ENCODE measurements at regions of chr6 and their contacts with region 1.

Region 1: DNA sequence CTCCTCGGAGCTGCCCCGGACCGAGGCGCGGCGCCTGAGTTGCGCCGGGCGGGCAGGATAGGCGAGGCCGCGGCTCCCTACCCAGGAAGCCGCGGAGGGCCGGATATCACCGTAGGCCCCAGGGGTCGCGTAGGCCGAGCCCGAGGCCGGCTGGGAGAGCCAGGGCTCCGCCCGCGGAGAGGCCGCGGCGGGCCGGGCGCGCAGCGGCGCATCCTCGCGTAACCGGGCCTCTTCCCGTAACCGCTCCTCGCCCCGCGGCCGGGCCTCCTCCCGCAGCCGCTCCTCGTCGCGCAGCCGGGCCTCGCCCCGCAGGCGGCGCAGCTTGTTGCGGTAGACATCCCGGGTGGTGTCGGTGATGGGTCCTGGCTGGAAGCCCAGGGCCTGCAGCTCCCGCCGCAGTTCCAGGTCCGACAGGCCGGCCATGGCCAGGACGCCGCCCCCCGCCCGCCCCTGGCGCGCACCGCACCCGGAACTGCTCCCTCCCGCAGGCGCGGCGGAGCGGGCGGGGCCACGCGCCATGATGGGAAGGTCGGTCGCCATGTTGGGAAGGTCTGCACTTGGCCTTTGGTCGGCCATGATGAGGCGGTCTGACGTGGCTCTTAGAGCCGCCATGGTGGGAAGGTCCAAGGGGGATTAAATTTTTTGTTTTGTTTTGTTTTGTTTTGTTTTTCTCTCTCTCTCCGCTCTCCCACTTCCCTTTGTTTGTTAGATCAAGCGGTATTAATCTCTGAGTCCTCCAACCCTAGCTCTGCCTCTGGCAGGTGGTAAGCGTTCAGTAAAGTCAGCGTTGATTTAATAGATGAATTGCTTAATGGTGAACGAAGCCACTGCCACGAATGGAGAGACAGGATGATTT is at the start of gene LEMD2:
- DNase-seq: peak; percentile 94
- ATAC-seq: peak; percentile 93
- H3K4me3 ChIP-seq: peak within 1 kb of the TSS; percentile 77
- H3K27ac ChIP-seq: peak within 1 kb of the TSS; percentile 88
- H3K4me1 ChIP-seq: peaks cover 13% of the 10 kb centered on the region
- H3K27me3 ChIP-seq: peaks cover 6% of the 10 kb centered on the region
- CTCF ChIP-seq: no peak
- POLR2A ChIP-seq: peak; percentile 71
- RAD21 ChIP-seq: no peak
- total RNA-seq, gene LEMD2: 24.4 and 26.5 TPM in 2 replicates

Region 2: DNA sequence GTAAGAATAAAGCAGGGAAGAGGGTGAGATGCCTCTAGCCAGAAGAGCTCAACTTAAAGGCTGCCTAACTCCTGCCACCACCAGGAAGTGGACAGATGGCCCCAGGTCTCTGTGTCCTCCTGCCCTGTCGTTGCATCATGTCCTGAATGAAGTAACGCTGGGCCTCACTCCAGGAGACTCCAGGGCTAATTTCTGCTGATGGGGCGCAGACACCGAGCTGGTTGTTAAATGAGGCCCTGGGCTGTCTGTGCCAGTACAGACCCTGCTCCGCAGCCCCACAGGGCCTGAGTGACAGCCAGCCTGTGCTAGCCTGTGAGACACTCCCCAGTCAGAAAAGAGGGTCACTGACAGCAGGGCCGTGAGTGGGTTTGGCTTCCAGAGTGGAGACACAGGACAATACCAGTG is 48.7 kb before region 1 on chr6:
- CTCF ChIA-PET with region 1: no interaction called
- POLR2A ChIA-PET with region 1: no interaction called
- dilution Hi-C with region 1: no loop called
- in situ Hi-C with region 1: no loop called
- intact Hi-C with region 1: no loop called
- DNase-seq: no peak
- ATAC-seq: no peak
- H3K4me3 ChIP-seq: no peak overlapping the region
- H3K27ac ChIP-seq: no peak overlapping the region
- H3K4me1 ChIP-seq: peaks cover 4% of the 10 kb centered on the region; the same call in 1 of the 2 replicates
- H3K27me3 ChIP-seq: peaks cover 8% of the 10 kb centered on the region; the same call in 1 of the 2 replicates
- CTCF ChIP-seq: no peak
- POLR2A ChIP-seq: no peak
- RAD21 ChIP-seq: no peak

Region 3: GRCh38 chr6:33840048-33840926 is 51.4 kb after region 1 on chr6:
- CTCF ChIA-PET with region 1: no interaction called
- POLR2A ChIA-PET with region 1: no interaction called
- dilution Hi-C with region 1: no loop called
- in situ Hi-C with region 1: no loop called
- intact Hi-C with region 1: loop called (anchors 2 kb)
- DNase-seq: peak; percentile 98
- ATAC-seq: peak; percentile 85
- H3K4me3 ChIP-seq: no peak overlapping the region
- H3K27ac ChIP-seq: peak overlapping the region; percentile 94
- H3K4me1 ChIP-seq: peaks cover 40% of the 10 kb centered on the region
- H3K27me3 ChIP-seq: no peaks in the 10 kb centered on the region
- CTCF ChIP-seq: no peak
- POLR2A ChIP-seq: no peak
- RAD21 ChIP-seq: no peak

Region 4: DNA sequence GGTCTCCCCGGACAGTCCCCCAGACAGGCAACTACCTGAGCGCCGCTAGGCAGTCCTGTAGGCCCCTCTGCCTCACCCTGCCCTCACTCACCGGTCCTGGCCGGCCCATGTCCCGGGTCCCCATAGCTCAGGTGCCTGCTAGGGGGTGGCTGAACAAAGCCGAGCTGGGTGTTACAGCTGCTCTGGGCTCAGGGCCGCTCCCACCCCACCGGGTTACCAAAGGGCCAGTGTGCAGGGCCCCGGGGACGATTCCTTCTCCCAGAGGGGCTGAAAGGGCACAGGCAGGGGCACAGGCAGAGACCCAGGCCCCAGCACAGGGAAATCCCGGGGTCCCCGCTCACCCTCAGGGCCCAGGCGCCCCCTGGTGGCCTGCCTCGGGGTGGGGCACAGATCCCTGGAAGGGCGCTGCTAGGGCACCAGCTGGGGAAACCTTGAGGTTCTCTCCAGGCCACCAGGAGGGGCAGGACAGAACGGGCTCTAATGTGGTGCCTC is 238.6 kb after region 1 on chr6:
- CTCF ChIA-PET with region 1: no interaction called
- POLR2A ChIA-PET with region 1: no interaction called
- dilution Hi-C with region 1: no loop called
- in situ Hi-C with region 1: no loop called
- intact Hi-C with region 1: loop called (anchors 5 kb)
- DNase-seq: peak; percentile 3
- ATAC-seq: peak; percentile 85
- H3K4me3 ChIP-seq: no peak overlapping the region
- H3K27ac ChIP-seq: no peak overlapping the region
- H3K4me1 ChIP-seq: no peaks in the 10 kb centered on the region
- H3K27me3 ChIP-seq: peaks cover 54% of the 10 kb centered on the region
- CTCF ChIP-seq: peak; percentile 73
- POLR2A ChIP-seq: no peak; the same call in 1 of the 2 replicates
- RAD21 ChIP-seq: peak; percentile 75